CD4-positive, alpha-beta memory T cell (primary cell): ENCODE measurements at regions of chr5 and their contacts with region 1.

Region 1: DNA sequence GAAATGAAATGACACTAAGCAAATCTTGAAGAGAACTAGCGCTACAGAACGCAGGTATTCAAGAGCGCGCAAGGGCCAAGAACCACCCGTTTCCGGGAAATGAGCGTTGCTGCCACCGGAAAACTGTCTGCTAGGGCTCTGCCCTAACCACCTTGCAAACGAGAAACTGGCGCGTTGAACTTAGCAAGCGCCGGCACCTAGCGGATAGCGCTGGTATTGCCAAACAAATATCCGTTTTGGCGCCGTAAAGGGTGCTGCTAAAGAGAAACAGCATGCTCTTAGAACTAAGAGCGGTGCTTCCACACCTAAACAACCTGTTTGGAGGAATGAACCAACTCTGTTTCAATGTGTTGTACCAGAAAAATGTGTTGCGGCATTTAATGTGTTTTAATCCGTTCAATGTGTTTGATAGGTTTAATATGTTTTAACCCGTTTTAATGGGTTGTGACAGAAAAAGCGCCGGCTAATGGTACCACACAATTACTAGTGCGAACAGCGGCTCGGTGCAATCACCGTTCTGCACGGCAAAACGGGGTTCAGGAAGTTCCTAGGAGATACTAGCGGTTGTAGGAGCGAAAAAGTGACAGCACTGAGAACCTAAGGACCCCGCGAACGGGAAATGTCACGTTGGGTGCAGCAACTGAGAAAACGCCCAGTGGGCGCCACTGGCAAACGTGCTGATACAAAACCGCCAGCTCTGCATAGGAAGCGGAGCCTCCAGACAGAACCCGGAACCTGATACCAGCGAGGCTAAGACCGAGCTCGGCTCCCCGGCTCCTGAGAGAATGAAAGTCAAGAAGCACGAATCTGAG is at the start of gene ANXA2R:
- DNase-seq: peak; percentile 94 to 97 (median 97)
- H3K4me3 ChIP-seq: peak within 1 kb of the TSS; percentile 78 to 99
- H3K4me3 Mint-ChIP-seq: peak within 1 kb of the TSS; percentile 97 to 100 (median 98)
- H3K27ac ChIP-seq: peak within 1 kb of the TSS; percentile 98
- H3K27ac Mint-ChIP-seq: peak within 1 kb of the TSS; percentile 99 to 100 (median 99)
- H3K4me1 ChIP-seq: peaks cover 50% of the 10 kb centered on the region
- H3K4me1 Mint-ChIP-seq: peaks cover 19 to 82% (median 39%) of the 10 kb centered on the region in 4 donors
- H3K27me3 ChIP-seq: no peaks in the 10 kb centered on the region
- H3K27me3 Mint-ChIP-seq: no peaks in the 10 kb centered on the region
- total RNA-seq, gene ANXA2R: 43.4 to 47.8 TPM

Region 2: GRCh38 chr5:42950440-42951292 is 89.8 kb before region 1 on chr5:
- CTCF ChIA-PET with region 1: interaction called, 40 read pairs
- POLR2A ChIA-PET with region 1: interaction called, 335 read pairs
- intact Hi-C with region 1: loop called (anchors 1 kb)
- DNase-seq: peak; percentile 61 to 90 (median 66)
- H3K4me3 ChIP-seq: peak overlapping the region; percentile 83 to 90
- H3K4me3 Mint-ChIP-seq: peak overlapping the region; percentile 93 to 99 (median 98)
- H3K27ac ChIP-seq: peak overlapping the region; percentile 96
- H3K27ac Mint-ChIP-seq: peak overlapping the region; percentile 99 to 100 (median 100)
- H3K4me1 ChIP-seq: peaks cover 22% of the 10 kb centered on the region
- H3K4me1 Mint-ChIP-seq: peaks cover 7 to 42% (median 30%) of the 10 kb centered on the region in 4 donors
- H3K27me3 ChIP-seq: no peaks in the 10 kb centered on the region
- H3K27me3 Mint-ChIP-seq: no peaks in the 10 kb centered on the region

Region 3: DNA sequence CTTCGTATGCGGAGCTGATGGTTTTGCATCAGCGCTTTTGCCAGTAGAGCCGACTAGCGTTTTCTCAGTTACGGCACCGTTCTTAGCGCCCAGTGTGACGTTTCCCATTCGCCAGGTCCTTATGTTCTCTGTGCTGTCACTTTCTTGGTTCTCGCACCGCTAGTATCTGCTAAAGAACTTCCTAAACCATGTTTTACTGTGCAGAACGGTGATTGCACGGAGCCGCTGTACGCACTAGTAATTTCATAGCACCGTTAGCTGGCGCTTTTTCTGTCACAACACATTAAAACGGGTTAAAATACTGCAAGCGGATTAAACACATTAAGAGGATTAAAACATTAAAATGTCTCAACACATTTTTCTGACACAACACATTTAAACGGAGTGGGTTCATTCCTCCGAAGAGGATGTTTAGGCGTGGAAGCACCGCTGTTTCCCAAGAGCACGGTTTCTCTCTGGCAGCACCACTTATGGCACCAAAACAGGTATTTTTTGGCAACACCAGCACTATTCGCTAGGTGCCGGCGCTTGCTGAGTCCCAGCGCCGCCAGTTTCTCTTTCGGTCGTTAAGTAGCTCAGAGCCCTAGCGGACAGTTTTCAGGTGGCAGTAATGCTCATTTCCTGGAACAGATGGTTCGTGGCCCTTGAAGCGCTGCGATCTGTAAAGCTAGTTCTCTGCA is 20.7 kb before region 1 on chr5:
- CTCF ChIA-PET with region 1: interaction called, 150 read pairs
- POLR2A ChIA-PET with region 1: interaction called, 1,197 read pairs
- intact Hi-C with region 1: loop called (anchors 1 kb)
- DNase-seq: peak; percentile 84 to 94 (median 91)
- H3K4me3 ChIP-seq: peak overlapping the region; percentile 73 to 83
- H3K4me3 Mint-ChIP-seq: peak overlapping the region; percentile 94 to 99 (median 98)
- H3K27ac ChIP-seq: peak overlapping the region; percentile 94
- H3K27ac Mint-ChIP-seq: peak overlapping the region; percentile 99 to 100 (median 100)
- H3K4me1 ChIP-seq: peaks cover 40% of the 10 kb centered on the region
- H3K4me1 Mint-ChIP-seq: peaks cover 24 to 67% (median 34%) of the 10 kb centered on the region in 4 donors
- H3K27me3 ChIP-seq: no peaks in the 10 kb centered on the region
- H3K27me3 Mint-ChIP-seq: no peaks in the 10 kb centered on the region

Region 4: GRCh38 chr5:43027054-43027785 is 13.3 kb before region 1 on chr5:
- CTCF ChIA-PET with region 1: interaction called, 150 read pairs
- POLR2A ChIA-PET with region 1: interaction called, 1,197 read pairs
- intact Hi-C with region 1: no loop called
- DNase-seq: no peak
- H3K4me3 ChIP-seq: no peak overlapping the region
- H3K4me3 Mint-ChIP-seq: no peak overlapping the region
- H3K27ac ChIP-seq: no peak overlapping the region
- H3K27ac Mint-ChIP-seq: peak overlapping the region in 1 of 7 donors; percentile 29
- H3K4me1 ChIP-seq: peaks cover 7% of the 10 kb centered on the region
- H3K4me1 Mint-ChIP-seq: peaks cover 14 to 30% (median 22%) of the 10 kb centered on the region in 4 donors
- H3K27me3 ChIP-seq: no peaks in the 10 kb centered on the region
- H3K27me3 Mint-ChIP-seq: no peaks in the 10 kb centered on the region

Region 5: GRCh38 chr5:43061352-43062075 is 21.0 kb after region 1 on chr5:
- CTCF ChIA-PET with region 1: interaction called, 80 read pairs
- POLR2A ChIA-PET with region 1: interaction called, 689 read pairs
- intact Hi-C with region 1: loop called (anchors 1 kb)
- DNase-seq: no peak
- H3K4me3 ChIP-seq: no peak overlapping the region
- H3K4me3 Mint-ChIP-seq: no peak overlapping the region
- H3K27ac ChIP-seq: no peak overlapping the region
- H3K27ac Mint-ChIP-seq: peak overlapping the region; percentile 20 to 93 (median 77)
- H3K4me1 ChIP-seq: peaks cover 8% of the 10 kb centered on the region
- H3K4me1 Mint-ChIP-seq: peaks cover 8 to 17% (median 13%) of the 10 kb centered on the region in 4 donors
- H3K27me3 ChIP-seq: no peaks in the 10 kb centered on the region
- H3K27me3 Mint-ChIP-seq: no peaks in the 10 kb centered on the region

Region 6: DNA sequence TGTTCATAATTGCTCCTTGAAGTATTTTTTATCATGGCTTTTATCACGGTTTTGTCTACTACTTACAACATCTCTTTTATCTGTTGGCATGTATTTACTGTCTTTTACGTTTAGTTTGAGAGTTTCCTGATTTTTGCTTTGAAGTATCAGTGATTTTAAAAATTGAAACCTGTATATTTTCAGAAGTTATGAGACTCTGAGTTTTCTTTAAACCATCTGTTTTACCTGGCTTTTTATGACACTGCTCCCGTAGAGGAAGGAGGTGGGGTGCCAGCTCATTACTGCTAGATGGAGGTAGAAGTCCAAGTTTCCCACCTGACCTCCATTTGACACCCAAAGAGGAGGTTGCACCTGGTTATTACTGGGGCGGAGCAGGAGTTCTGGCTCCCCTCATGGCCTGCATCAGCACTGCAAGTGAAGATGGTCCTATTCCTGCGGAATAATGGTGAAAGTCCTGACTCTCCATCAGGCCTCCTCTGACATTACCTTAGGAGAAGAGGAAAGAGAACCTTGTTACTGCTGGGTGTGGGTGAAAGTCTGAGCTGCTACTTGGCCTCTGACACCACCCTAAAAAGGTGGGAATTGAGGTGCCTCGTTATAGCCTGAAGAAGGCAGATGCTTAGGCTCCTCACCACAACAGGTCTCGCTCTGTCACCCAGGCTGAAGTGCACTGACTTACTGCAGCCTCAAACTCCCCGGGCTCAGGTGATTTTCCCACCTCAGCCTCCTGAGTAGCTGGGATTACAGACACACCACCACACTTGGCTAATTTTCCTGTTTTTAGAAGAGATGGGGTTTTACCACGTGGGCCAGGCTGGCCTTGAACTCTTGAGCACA is 70.3 kb after region 1 on chr5:
- CTCF ChIA-PET with region 1: interaction called, 20 read pairs
- POLR2A ChIA-PET with region 1: interaction called, 19 read pairs
- intact Hi-C with region 1: no loop called
- DNase-seq: peak in 4 of 5 donors; percentile 26 to 55 (median 40)
- H3K4me3 ChIP-seq: no peak overlapping the region
- H3K4me3 Mint-ChIP-seq: peak overlapping the region; percentile 18 to 79 (median 62)
- H3K27ac ChIP-seq: peak overlapping the region; percentile 36
- H3K27ac Mint-ChIP-seq: peak overlapping the region; percentile 63 to 91 (median 87)
- H3K4me1 ChIP-seq: peaks cover 32% of the 10 kb centered on the region
- H3K4me1 Mint-ChIP-seq: peaks cover 17 to 34% (median 24%) of the 10 kb centered on the region in 4 donors
- H3K27me3 ChIP-seq: no peaks in the 10 kb centered on the region
- H3K27me3 Mint-ChIP-seq: no peaks in the 10 kb centered on the region

Region 7: GRCh38 chr5:43332396-43332795 is 291.9 kb after region 1 on chr5:
- CTCF ChIA-PET with region 1: no interaction called
- POLR2A ChIA-PET with region 1: no interaction called
- intact Hi-C with region 1: no loop called
- DNase-seq: no peak
- H3K4me3 ChIP-seq: no peak overlapping the region
- H3K4me3 Mint-ChIP-seq: no peak overlapping the region
- H3K27ac ChIP-seq: no peak overlapping the region
- H3K27ac Mint-ChIP-seq: no peak overlapping the region
- H3K4me1 ChIP-seq: no peaks in the 10 kb centered on the region
- H3K4me1 Mint-ChIP-seq: no peaks in the 10 kb centered on the region
- H3K27me3 ChIP-seq: no peaks in the 10 kb centered on the region
- H3K27me3 Mint-ChIP-seq: peaks cover 16 to 26% of the 10 kb centered on the region in 2 donors